CD14-positive monocyte (primary cell): ENCODE measurements at regions of chr1 and their contacts with region 1.

Region 1: DNA sequence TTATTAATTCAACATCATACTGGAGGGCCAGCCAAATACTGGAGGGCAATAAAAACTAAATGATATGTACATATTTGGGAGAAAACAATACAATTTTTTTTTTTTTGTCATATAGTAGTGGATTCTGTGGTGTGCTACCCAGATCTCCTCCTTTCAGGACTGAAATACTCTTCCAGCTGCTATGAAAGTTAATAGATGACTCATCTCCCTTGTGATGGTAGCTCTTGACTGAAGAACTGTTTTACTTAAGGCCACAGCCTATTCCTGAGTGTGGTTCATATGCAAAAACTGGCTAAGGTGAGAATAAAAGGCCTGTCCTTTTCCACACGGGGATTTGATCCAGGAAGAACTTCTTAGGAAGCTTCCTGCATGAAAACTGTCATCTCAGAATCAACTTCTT is 307.9 kb downstream of the HLX start:
- DNase-seq: peak in 1 of 3 donors; percentile 45
- H3K4me3 ChIP-seq: no peak overlapping the region
- H3K4me3 Mint-ChIP-seq: no peak overlapping the region
- H3K27ac ChIP-seq: no peak overlapping the region
- H3K27ac Mint-ChIP-seq: peak overlapping the region in 1 of 7 donors; percentile 54
- H3K4me1 ChIP-seq: peaks cover 24 to 45% of the 10 kb centered on the region in 2 donors
- H3K4me1 Mint-ChIP-seq: peaks cover 31% of the 10 kb centered on the region
- H3K27me3 ChIP-seq: no peaks in the 10 kb centered on the region
- H3K27me3 Mint-ChIP-seq: peaks cover 0 to 1% (median 0%) of the 10 kb centered on the region in 3 donors
- CTCF ChIP-seq: no peak

Region 2: DNA sequence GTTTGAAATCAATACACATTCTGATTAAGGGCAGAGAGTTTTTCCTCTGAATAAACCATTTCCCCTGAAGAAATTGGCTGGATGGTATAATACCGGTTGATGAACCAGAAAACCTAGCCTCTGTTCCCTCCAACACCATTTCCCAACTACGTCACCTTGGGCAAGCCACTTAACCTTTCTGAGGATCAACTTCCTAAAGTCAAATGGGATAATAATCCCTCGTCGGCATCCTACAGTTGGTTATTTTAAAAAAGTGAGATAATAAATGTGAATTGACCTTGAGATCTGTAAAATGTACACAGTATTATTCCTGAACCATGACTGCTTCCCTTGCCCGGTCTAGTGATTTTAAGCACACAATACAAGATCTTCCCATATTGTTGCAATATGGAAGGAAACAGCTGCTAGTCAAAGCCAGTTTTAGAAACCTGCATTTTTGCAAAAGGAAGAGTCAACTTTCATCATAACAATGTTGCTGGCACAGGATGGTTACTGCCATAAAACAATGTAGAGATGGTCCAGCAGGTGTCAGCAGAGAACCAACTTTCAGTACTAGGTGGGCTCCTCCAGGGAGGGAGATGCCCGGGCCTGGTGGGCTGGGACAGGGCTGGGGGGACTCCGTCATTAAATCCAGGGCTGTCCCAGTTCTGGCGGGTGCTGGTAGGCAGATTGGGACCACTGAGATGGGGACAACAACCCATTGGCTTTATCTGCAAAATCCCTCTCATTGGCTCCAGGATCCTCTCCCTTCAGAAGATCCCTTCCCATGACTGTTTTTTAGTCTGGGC is 313.1 kb before region 1 on chr1:
- intact Hi-C with region 1: loop called in 1 of 2 experiments (anchors 5 kb)
- DNase-seq: peak in 2 of 3 donors; percentile 40 to 46
- H3K4me3 ChIP-seq: no peak overlapping the region
- H3K4me3 Mint-ChIP-seq: no peak overlapping the region
- H3K27ac ChIP-seq: no peak overlapping the region
- H3K27ac Mint-ChIP-seq: no peak overlapping the region
- H3K4me1 ChIP-seq: peaks cover 33 to 38% of the 10 kb centered on the region in 2 donors
- H3K4me1 Mint-ChIP-seq: peaks cover 37% of the 10 kb centered on the region
- H3K27me3 ChIP-seq: no peaks in the 10 kb centered on the region
- H3K27me3 Mint-ChIP-seq: peaks cover 0 to 6% (median 0%) of the 10 kb centered on the region in 3 donors
- CTCF ChIP-seq: peak; percentile 91

Region 3: DNA sequence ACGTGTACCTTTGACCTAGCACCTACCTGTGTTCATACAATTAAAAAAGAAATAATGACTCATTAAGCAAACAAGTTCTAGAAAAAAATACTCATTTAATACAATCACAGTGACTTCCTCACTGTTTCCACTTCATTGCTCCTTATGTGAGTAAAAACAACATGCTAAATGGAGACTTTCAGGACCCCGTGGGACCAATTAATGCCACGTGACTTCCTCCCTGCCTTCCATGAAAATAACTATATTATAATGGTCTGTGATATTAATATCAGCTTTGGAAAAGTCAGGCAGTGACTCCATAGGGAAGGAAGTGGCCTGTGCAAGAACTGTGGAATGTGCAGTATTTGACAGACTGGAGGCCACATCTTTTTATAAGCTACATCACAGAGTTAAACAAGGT is 29.9 kb after region 1 on chr1:
- intact Hi-C with region 1: no loop called
- DNase-seq: no peak
- H3K4me3 ChIP-seq: no peak overlapping the region
- H3K4me3 Mint-ChIP-seq: no peak overlapping the region
- H3K27ac ChIP-seq: no peak overlapping the region
- H3K27ac Mint-ChIP-seq: no peak overlapping the region
- H3K4me1 ChIP-seq: no peaks in the 10 kb centered on the region
- H3K4me1 Mint-ChIP-seq: no peaks in the 10 kb centered on the region
- H3K27me3 ChIP-seq: no peaks in the 10 kb centered on the region
- H3K27me3 Mint-ChIP-seq: peaks cover 0 to 8% (median 0%) of the 10 kb centered on the region in 3 donors
- CTCF ChIP-seq: no peak